PC-3 (cell line): ENCODE measurements at regions of chr16 and their contacts with region 1.

Region 1: DNA sequence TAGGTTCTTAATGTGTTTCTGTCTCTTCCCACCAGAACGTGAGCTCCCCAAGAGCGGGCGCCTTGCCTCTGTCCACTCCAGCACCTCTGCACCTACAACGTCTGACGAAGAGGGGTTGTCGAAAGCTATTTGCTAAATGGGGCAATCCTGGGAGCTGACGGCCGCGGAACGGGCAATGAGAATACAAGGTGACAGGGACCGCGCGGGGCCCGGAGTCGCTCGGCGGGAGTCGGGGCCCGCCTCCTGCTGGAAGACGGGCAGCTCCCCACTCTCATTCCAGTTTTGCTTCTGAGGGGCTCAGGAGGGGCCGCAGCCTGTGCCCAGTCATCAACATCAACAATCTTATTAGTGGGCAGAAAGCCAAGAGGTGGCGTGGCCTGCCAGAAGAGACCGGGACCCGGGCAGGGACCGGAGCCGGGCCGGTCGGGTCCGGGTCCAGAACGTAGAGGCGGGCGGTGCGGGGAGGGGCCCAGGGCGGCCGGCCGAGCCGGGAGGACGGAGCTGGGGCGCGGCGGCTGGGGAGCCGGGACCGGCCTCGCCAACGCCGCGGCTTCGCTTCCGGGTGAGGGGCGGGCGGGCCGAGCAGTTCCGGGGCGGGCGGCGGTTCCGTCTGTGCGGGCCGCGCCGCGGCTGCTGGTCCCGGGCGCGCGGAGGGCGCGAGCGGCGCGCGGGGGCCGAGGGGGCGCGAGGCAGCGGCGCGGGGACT is at the start of gene MOSMO:
- DNase-seq: peak; percentile 62
- ATAC-seq: peak; percentile 86
- H3K4me3 ChIP-seq: peak within 1 kb of the TSS; percentile 95
- H3K27ac ChIP-seq: peak within 1 kb of the TSS; percentile 78
- H3K4me1 ChIP-seq: peaks cover 32% of the 10 kb centered on the region
- H3K27me3 ChIP-seq: no peaks in the 10 kb centered on the region
- CTCF ChIP-seq: no peak
- total RNA-seq, gene MOSMO: 11.8 and 12.4 TPM in 2 replicates

Region 2: DNA sequence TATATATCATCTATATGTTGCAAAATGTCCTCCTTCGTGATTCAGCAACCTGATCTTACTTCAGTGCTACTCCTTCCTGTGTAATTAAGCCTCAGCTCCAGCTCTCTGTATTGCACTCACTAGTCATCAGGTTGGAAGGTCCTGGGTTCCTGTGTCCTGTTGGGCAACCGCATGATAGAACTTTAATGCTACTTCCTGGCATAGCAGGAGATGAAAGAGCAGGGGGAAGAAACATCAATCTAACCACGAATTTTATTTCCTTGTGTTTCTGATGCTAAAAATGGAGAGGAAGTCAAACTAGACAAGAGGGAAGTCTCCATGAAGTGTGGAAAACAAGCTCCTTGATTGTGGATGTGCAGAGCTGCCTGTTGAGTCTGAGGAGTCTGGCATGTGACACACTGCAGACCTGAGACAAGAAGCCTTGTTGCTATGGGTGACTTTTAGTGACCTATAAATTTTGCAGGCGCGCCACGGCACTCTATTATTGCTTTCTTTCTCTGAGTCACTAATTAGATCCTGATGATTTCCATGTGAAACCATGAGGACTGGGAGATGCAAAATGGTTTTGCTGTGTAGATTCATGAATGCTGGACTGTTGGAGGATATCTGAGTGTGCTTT is 380.9 kb before region 1 on chr16:
- CTCF ChIA-PET with region 1: no interaction called
- POLR2A ChIA-PET with region 1: interaction called, 12 read pairs
- intact Hi-C with region 1: no loop called
- DNase-seq: peak; percentile 67
- ATAC-seq: peak; percentile 56
- H3K4me3 ChIP-seq: no peak overlapping the region
- H3K27ac ChIP-seq: peak overlapping the region; percentile 85
- H3K4me1 ChIP-seq: peaks cover 18% of the 10 kb centered on the region
- H3K27me3 ChIP-seq: no peaks in the 10 kb centered on the region
- CTCF ChIP-seq: no peak

Region 3: GRCh38 chr16:22023505-22023904 is 15.8 kb after region 1 on chr16:
- CTCF ChIA-PET with region 1: interaction called, 3 read pairs
- POLR2A ChIA-PET with region 1: interaction called, 27 read pairs
- intact Hi-C with region 1: loop called (anchors 2 kb)
- DNase-seq: no peak
- ATAC-seq: no peak
- H3K4me3 ChIP-seq: no peak overlapping the region
- H3K27ac ChIP-seq: no peak overlapping the region
- H3K4me1 ChIP-seq: peaks cover 49% of the 10 kb centered on the region
- H3K27me3 ChIP-seq: no peaks in the 10 kb centered on the region
- CTCF ChIP-seq: no peak

Region 4: DNA sequence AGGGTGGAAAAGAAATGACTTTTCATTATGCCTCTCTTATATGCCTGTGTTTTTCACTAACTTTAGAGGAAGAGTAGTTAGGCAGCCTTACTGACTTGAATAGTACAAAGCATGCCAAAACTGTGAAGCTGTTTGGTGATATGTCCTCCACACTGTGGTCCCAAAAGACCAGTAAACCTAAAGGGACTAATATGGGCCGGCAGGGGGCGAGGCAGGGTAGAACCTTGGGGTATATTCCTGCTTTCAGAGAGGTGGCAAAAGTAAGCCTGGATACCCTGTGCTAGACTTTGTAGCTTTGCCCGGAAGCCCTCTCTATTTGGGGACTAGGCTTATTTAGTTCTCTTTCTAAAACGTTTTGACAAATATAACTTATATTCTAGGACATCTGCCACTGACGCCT is 48.2 kb after region 1 on chr16:
- CTCF ChIA-PET with region 1: no interaction called
- POLR2A ChIA-PET with region 1: no interaction called
- intact Hi-C with region 1: no loop called
- DNase-seq: no peak
- ATAC-seq: no peak
- H3K4me3 ChIP-seq: no peak overlapping the region
- H3K27ac ChIP-seq: no peak overlapping the region
- H3K4me1 ChIP-seq: 0 out of 2 replicates have a peak, but pooled peaks cover 4% of the 10 kb centered on the region
- H3K27me3 ChIP-seq: no peaks in the 10 kb centered on the region
- CTCF ChIP-seq: no peak

Region 5: DNA sequence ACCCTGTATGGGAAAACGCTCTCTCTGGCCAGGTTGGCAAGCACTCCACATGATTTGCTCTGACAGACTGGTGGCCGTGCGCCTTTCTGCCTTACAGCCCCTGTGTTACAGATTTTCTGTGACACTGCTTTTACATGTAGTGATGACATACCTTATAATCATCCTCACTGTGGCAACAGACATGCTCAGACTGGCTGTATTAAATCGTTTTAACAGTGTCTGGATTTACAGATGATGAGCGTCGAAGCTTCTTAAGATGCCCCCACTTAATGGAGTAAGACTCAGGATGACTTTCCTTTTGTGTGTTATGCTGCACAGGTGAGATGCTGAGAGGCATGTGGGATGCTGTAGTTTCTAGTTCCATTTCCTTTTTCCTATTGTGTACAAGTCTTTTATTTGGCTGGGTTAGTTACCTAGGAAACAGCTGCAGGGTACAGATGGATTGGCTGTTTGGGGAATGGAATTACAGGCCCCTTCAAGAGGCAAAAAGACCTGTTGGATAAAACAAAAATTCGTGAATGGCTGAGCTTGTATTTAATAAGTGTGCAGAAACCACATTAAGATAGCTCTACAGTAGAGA is 63.8 kb after region 1 on chr16:
- CTCF ChIA-PET with region 1: no interaction called
- POLR2A ChIA-PET with region 1: interaction called, 28 read pairs
- intact Hi-C with region 1: no loop called
- DNase-seq: no peak
- ATAC-seq: no peak; the same call in 1 of the 2 replicates
- H3K4me3 ChIP-seq: no peak overlapping the region
- H3K27ac ChIP-seq: no peak overlapping the region
- H3K4me1 ChIP-seq: peaks cover 18% of the 10 kb centered on the region
- H3K27me3 ChIP-seq: no peaks in the 10 kb centered on the region
- CTCF ChIP-seq: no peak